ENCODE measurements at regions of chr11 and their contacts with region 1.

Region 1: DNA sequence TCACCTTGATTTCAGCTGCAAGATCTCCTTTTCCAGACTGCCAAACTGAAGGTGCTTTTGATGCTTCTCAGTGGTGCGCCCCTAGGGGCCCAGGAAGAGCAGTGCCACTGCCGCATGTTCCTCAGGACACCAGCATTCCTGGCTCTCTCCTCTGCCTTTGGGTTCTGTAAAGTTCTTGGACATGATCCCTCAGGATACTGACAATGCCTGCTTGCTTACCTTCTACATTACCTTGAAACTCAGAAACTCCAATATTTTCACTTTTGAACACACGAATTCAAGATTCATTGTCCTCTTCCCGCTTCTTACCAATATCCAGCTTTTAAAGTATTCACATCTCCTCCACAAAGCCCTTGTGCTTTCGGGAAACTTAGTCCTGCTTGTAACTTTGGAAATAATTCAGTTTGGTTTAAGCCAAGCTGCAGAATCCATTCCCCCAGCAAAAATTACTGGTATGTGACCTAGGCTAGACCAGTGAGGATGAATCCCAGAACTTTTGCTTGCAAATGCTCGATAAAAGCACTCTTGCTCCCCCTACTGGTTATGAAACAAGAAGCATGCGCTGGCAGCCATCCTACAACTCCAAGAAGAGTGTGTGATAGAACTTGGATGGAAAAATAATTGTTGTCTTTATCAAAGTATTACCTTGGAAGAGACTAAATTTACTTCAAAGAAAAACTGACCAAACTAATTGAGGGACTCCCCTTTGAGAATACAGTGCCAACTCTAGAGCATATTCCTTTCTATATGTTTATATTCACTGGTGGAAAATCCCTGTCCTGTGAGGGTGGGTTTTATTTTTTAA is 16.5 kb upstream of the OR5B21 start:
- DNase-seq: peak; percentile 46 to 60
- ATAC-seq: peak; percentile 67 to 89 (median 83)
- H3K4me3 ChIP-seq: peak overlapping the region in 4 of 10 donors; percentile 9 to 37 (median 28)
- H3K27ac ChIP-seq: peak overlapping the region in 2 of 10 donors; percentile 7 to 74
- H3K4me1 ChIP-seq: peaks cover 0 to 37% (median 7%) of the 10 kb centered on the region in 9 donors
- H3K27me3 ChIP-seq: no peaks in the 10 kb centered on the region
- CTCF ChIP-seq: peak; percentile 51 to 81 (median 76)

Region 2: GRCh38 chr11:57751676-57752253 is 772.7 kb before region 1 on chr11 and contains the start of gene BTBD18:
- intact Hi-C with region 1: loop called in 3 of 10 experiments (anchors 5 to 10 kb)
- DNase-seq: peak in 1 of 2 donors; percentile 23
- ATAC-seq: peak; percentile 61 to 89 (median 85)
- H3K4me3 ChIP-seq: no peak within 1 kb of the TSS
- H3K27ac ChIP-seq: peak within 1 kb of the TSS in 4 of 10 donors; percentile 7 to 61 (median 55)
- H3K4me1 ChIP-seq: peaks cover 0 to 10% (median 6%) of the 10 kb centered on the region in 9 donors
- H3K27me3 ChIP-seq: no peaks in the 10 kb centered on the region
- CTCF ChIP-seq: peak; percentile 29 to 65 (median 59)
- total RNA-seq, gene BTBD18: not detected

Region 3: DNA sequence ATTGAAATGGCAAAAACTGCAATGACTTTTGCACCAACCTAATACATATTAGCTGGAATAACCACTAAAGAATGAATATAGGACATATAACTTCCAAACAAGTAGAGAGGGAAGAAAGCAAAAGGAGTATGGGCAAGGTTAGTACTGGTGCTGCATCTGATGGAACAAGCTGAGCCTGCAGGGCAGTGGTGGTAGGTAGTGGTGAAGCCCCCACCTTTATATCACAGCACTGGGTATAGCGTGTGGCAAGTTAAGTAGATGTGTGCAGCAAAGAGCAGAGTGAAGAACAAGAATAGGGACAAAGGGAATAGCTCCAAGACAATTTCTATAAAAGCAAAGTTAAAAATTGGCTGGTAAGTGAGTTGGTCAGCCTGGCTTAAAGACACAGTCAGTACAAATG is 700.6 kb before region 1 on chr11:
- intact Hi-C with region 1: loop called in 3 of 10 experiments (anchors 10 kb)
- DNase-seq: no peak
- ATAC-seq: no peak
- H3K4me3 ChIP-seq: no peak overlapping the region
- H3K27ac ChIP-seq: no peak overlapping the region
- H3K4me1 ChIP-seq: peaks cover 0 to 4% (median 0%) of the 10 kb centered on the region in 9 donors
- H3K27me3 ChIP-seq: no peaks in the 10 kb centered on the region
- CTCF ChIP-seq: no peak

Region 4: DNA sequence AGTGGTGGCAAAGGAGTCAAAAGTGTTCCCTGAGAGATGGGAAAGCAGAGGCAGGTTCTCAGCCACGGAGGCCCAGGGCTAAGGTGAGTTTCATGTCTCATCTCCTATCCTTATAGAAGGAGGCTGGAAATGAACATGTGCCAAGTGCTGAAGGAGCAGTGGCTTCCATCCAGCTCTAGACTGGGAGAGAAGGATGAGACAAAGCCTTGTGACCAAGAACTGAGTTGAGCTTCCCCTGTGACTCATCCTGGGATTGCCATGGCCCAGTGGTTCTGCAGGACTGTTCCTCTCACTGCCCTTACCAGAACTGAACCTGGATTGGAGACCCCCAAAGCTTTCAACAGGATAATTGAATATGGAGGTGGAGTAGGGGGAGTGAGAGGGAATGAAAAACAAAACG is 517.5 kb before region 1 on chr11:
- intact Hi-C with region 1: no loop called
- DNase-seq: no peak
- ATAC-seq: no peak
- H3K4me3 ChIP-seq: no peak overlapping the region
- H3K27ac ChIP-seq: no peak overlapping the region
- H3K4me1 ChIP-seq: peaks cover 0 to 34% (median 0%) of the 10 kb centered on the region in 9 donors
- H3K27me3 ChIP-seq: no peaks in the 10 kb centered on the region
- CTCF ChIP-seq: no peak

Region 5: GRCh38 chr11:58685973-58686722 is 161.7 kb after region 1 on chr11:
- intact Hi-C with region 1: no loop called
- DNase-seq: no peak
- ATAC-seq: no peak
- H3K4me3 ChIP-seq: no peak overlapping the region
- H3K27ac ChIP-seq: no peak overlapping the region
- H3K4me1 ChIP-seq: no peaks in the 10 kb centered on the region
- H3K27me3 ChIP-seq: peaks cover 0 to 10% (median 0%) of the 10 kb centered on the region in 7 donors
- CTCF ChIP-seq: no peak

Measured in heart right ventricle (tissue), 16 donors.